Vagina (tissue), 2 donors: ENCODE measurements at regions of chr4 and their contacts with region 1.

Region 1: DNA sequence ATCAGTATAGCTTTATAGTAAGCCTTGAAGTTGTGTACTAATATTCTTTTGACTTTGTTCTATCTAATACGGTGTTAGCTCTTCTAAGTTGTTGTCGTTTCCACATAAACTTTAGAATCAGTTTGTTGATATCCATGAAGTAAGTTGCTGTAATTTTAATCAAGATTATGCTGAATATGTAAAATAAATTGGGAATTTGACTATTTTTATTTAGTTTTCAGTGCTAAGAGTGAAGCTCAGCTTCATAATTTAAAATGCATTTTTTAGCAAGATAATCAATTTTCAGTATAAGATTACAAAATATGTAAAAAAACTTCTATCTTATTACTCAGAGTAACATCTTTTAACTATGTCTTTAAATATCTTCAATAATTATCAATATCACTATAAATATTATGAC is 1374.8 kb downstream of the PCDH7 start:
- DNase-seq: no peak
- H3K4me3 ChIP-seq: no peak overlapping the region
- H3K27ac ChIP-seq: no peak overlapping the region
- H3K4me1 ChIP-seq: no peaks in the 10 kb centered on the region
- H3K27me3 ChIP-seq: no peaks in the 10 kb centered on the region
- CTCF ChIP-seq: no peak
- POLR2A ChIP-seq: no peak

Region 2: DNA sequence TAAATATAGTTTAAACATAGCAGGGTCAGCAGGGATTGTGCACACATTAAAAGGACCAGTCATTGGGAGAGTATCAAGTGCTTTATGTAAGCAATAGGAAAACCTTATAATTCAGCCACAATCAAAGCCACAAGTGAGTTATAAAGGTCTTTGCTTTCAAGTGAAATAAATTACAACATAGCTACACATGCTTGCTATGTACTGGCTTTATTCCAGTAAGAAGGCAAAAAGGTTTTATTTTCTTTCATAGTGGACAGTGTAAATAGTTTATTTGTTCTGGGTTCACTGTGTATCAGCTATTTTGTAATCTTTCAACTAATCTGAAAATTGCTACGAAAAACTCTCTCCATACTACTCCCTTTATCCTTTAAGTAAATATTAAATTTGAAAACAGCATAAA is 683.4 kb before region 1 on chr4:
- intact Hi-C with region 1: loop called (anchors 5 kb)
- DNase-seq: no peak
- H3K4me3 ChIP-seq: no peak overlapping the region
- H3K27ac ChIP-seq: no peak overlapping the region
- H3K4me1 ChIP-seq: no peaks in the 10 kb centered on the region
- H3K27me3 ChIP-seq: no peaks in the 10 kb centered on the region
- CTCF ChIP-seq: no peak
- POLR2A ChIP-seq: no peak

Region 3: DNA sequence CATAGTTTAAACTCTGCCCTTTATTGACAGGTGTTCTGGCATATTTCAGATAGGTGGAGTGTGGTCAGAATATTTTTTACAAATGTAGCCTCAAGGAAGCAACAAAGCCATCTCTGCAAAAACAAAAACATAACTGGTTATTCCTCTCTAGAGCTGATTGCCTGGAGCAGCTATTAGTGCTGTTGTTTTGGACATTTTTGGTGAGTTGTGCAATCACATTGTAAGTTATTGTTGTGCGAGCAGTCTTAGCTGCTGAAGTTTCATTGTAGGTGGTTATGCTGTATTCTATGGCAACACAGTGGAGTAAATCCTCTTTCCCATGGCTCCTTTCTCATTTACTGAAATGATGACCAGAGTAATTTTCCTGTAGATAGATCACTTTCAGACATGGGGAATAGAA is 38.2 kb after region 1 on chr4:
- intact Hi-C with region 1: no loop called
- DNase-seq: no peak
- H3K4me3 ChIP-seq: no peak overlapping the region
- H3K27ac ChIP-seq: no peak overlapping the region
- H3K4me1 ChIP-seq: no peaks in the 10 kb centered on the region
- H3K27me3 ChIP-seq: no peaks in the 10 kb centered on the region
- CTCF ChIP-seq: no peak
- POLR2A ChIP-seq: no peak